ENCODE measurements at regions of chr1 and their contacts with region 1.

Region 1: DNA sequence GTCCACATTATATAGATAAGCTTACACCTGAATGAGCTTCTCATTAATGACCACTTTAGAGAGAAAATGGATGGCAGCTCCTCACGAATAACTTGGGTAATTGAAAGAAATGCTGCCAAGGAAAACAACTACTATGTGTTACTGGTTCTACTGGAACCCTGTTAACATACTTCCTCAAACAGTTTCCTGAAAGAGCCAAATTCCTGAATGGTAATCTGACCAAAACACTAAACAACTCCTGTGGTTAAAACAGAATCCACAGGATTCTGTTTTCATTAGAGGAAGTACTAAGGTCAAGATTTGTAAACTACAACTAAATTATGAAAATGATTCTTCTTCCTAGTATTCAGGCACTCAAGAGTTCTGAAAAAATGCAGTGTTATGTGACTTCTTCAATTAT is 107.2 kb downstream of the DNM3 start:
- DNase-seq: no peak
- ATAC-seq: no peak
- H3K4me3 ChIP-seq: no peak overlapping the region
- H3K27ac ChIP-seq: no peak overlapping the region
- H3K4me1 ChIP-seq: peaks cover 0 to 3% of the 10 kb centered on the region in 2 donors
- H3K27me3 ChIP-seq: no peaks in the 10 kb centered on the region
- CTCF ChIP-seq: no peak
- POLR2A ChIP-seq: no peak

Region 2: DNA sequence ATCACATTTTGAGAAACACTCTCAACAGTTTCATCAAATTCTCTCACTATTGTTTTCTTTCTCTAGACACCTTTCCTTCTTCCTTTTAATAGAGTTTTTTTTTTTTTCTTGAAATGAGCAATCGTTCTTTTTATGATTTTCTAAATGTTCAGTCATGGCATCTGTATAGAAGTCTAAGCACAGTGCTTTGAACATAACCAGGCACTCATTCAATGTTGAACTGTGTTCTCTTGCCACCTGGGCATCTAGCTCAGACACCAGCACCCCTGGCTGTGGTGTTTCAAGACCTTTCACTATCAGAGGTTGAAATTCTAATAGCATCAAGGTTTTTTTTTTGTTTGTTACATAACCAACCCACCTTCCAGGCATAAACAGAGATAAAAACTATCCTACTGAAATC is 10.6 kb before region 1 on chr1:
- in situ Hi-C with region 1: no loop called
- intact Hi-C with region 1: loop called (anchors 1 kb)
- DNase-seq: no peak
- ATAC-seq: no peak
- H3K4me3 ChIP-seq: no peak overlapping the region
- H3K27ac ChIP-seq: no peak overlapping the region
- H3K4me1 ChIP-seq: no peaks in the 10 kb centered on the region
- H3K27me3 ChIP-seq: no peaks in the 10 kb centered on the region
- CTCF ChIP-seq: no peak
- POLR2A ChIP-seq: no peak

Region 3: GRCh38 chr1:172024516-172024915 is 76.0 kb after region 1 on chr1:
- in situ Hi-C with region 1: no loop called
- intact Hi-C with region 1: no loop called
- DNase-seq: no peak
- ATAC-seq: no peak
- H3K4me3 ChIP-seq: no peak overlapping the region
- H3K27ac ChIP-seq: no peak overlapping the region
- H3K4me1 ChIP-seq: no peaks in the 10 kb centered on the region
- H3K27me3 ChIP-seq: no peaks in the 10 kb centered on the region
- CTCF ChIP-seq: no peak
- POLR2A ChIP-seq: no peak